MCF 10A (cell line): ENCODE measurements at regions of chr15 and their contacts with region 1.

Region 1: DNA sequence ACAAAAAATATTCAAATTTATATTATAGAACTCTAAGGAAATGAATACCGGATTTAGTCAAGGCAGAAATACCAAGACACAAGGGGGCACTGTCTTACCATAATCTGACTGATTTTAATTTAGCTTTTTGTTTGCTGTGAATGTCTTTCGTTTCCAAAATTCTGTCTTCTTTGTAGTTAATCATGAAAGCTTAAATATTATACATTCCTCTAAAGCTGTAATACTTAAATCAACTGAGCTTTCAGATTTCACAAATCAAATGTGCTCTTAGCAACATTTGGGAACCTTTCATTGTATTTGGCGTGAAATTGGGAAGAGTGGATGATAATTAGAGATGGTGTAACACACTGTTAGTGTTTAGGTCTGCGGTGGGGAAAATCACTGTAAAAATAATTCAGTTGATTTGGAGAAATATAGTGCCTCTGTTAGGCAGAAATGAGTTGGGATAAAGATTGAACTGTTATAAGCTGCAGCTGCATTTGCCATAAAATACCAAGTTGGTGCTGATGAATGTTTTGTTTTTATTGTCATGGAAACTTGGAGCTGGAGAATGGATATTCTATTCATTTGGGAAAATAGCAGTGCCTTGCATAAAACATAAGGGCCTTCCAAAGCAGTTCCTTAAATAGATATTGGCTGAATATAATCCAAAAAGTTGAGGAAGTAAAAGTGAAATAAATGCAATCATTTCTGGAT is 228.2 kb downstream of the TCF12 start:
- DNase-seq: peak; percentile 54
- H3K4me3 Mint-ChIP-seq: no peak overlapping the region
- H3K27ac Mint-ChIP-seq: no peak overlapping the region
- H3K4me1 Mint-ChIP-seq: peaks cover 27% of the 10 kb centered on the region
- H3K27me3 Mint-ChIP-seq: no peaks in the 10 kb centered on the region
- CTCF ChIP-seq: peak; percentile 69

Region 2: GRCh38 chr15:57017024-57017423 is 129.6 kb before region 1 on chr15:
- CTCF ChIA-PET with region 1: no interaction called
- POLR2A ChIA-PET with region 1: interaction called, 3 read pairs
- intact Hi-C with region 1: loop called (anchors 5 kb)
- DNase-seq: peak; percentile 33
- H3K4me3 Mint-ChIP-seq: no peak overlapping the region
- H3K27ac Mint-ChIP-seq: no peak overlapping the region
- H3K4me1 Mint-ChIP-seq: peaks cover 36% of the 10 kb centered on the region
- H3K27me3 Mint-ChIP-seq: no peaks in the 10 kb centered on the region
- CTCF ChIP-seq: no peak

Region 3: DNA sequence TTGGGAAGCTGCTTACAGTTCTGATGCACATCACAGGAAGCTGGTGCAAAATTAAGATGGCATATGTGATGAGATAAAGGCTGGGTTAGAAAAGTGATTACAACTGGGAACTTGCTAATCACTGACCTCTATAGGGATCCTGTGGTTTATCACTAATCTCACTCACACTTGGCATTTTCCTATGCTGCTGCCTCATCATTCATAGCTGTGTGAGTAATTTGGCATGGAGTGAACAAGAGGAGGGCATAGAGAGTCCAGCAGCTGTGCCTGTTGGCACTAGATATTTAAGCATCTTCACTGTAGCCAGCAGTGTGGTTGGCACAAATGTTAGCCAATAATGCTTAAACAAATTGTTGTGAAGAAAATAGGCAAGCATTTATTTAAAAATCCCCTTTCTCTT is 11.9 kb after region 1 on chr15:
- CTCF ChIA-PET with region 1: interaction called, 21 read pairs
- POLR2A ChIA-PET with region 1: interaction called, 6 read pairs
- intact Hi-C with region 1: no loop called
- DNase-seq: peak; percentile 84
- H3K4me3 Mint-ChIP-seq: no peak overlapping the region
- H3K27ac Mint-ChIP-seq: no peak overlapping the region
- H3K4me1 Mint-ChIP-seq: peaks cover 11% of the 10 kb centered on the region
- H3K27me3 Mint-ChIP-seq: no peaks in the 10 kb centered on the region
- CTCF ChIP-seq: no peak

Region 4: GRCh38 chr15:57213862-57214261 is 67.2 kb after region 1 on chr15:
- CTCF ChIA-PET with region 1: interaction called, 105 read pairs
- POLR2A ChIA-PET with region 1: interaction called, 14 read pairs
- intact Hi-C with region 1: loop called (anchors 1 kb)
- DNase-seq: peak; percentile 46
- H3K4me3 Mint-ChIP-seq: no peak overlapping the region
- H3K27ac Mint-ChIP-seq: no peak overlapping the region
- H3K4me1 Mint-ChIP-seq: peaks cover 11% of the 10 kb centered on the region
- H3K27me3 Mint-ChIP-seq: no peaks in the 10 kb centered on the region
- CTCF ChIP-seq: peak; percentile 37

Region 5: DNA sequence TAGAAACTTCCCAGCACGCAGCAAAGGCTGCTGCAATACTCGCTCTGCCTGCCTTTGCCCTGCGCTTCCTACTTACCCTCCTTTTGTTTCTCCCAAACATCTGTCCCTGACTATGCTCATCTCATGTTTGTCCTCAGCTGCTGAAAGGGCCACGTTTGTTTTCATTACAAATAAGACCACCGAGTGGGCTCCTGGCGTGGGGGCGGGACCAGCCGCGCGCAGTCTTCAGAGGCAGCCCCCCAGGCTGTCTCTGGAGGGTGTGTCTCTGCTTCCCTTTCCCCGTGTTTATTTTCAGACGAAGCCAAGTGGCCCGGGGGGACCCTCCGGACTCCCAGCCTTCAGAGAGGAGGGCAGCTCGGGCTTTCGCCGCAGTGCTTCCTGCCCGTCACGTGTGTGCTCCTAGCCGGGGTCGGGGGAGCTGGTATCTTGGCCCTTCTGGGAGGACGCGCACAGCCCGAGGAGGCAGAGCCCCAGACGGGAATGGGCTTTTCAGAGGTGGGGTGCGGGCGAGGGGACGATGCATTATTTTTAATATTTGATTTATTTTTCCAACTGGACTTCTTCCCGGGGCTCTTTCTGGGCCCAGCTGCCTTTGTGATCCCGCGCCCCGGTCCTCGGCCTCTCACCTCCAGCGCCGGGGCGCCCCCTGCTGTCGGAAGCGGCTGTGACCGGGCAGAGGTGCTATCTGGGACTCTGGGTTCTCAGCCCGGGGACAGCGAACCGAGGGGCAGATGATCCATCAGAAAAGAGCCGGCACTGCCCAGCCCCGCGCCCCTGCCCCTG is 159.7 kb after region 1 on chr15:
- CTCF ChIA-PET with region 1: interaction called, 55 read pairs
- POLR2A ChIA-PET with region 1: interaction called, 3 read pairs
- intact Hi-C with region 1: loop called (anchors 1 kb)
- DNase-seq: peak; percentile 74
- H3K4me3 Mint-ChIP-seq: peak overlapping the region; percentile 32
- H3K27ac Mint-ChIP-seq: no peak overlapping the region
- H3K4me1 Mint-ChIP-seq: no peaks in the 10 kb centered on the region
- H3K27me3 Mint-ChIP-seq: no peaks in the 10 kb centered on the region
- CTCF ChIP-seq: peak; percentile 77

Region 6: GRCh38 chr15:57541805-57542504 is 395.3 kb after region 1 on chr15:
- CTCF ChIA-PET with region 1: interaction called, 10 read pairs
- POLR2A ChIA-PET with region 1: no interaction called
- intact Hi-C with region 1: no loop called
- DNase-seq: peak; percentile 80
- H3K4me3 Mint-ChIP-seq: no peak overlapping the region
- H3K27ac Mint-ChIP-seq: no peak overlapping the region
- H3K4me1 Mint-ChIP-seq: no peaks in the 10 kb centered on the region
- H3K27me3 Mint-ChIP-seq: peaks cover 17% of the 10 kb centered on the region
- CTCF ChIP-seq: peak; percentile 78